CD8-positive, alpha-beta T cell (primary cell): ENCODE measurements at regions of chr10 and their contacts with region 1.

Region 1: GRCh38 chr10:68331455-68332258 is at the start of gene HNRNPH3:
- DNase-seq: peak; percentile 98 to 100 (median 99)
- ATAC-seq: peak; percentile 82
- H3K4me3 ChIP-seq: peak within 1 kb of the TSS; percentile 75 to 83
- H3K4me3 Mint-ChIP-seq: peak within 1 kb of the TSS; percentile 100
- H3K27ac ChIP-seq: peak within 1 kb of the TSS; percentile 86 to 99
- H3K27ac Mint-ChIP-seq: peak within 1 kb of the TSS; percentile 100
- H3K4me1 ChIP-seq: peaks cover 28% of the 10 kb centered on the region
- H3K4me1 Mint-ChIP-seq: peaks cover 44% of the 10 kb centered on the region
- H3K27me3 ChIP-seq: no peaks in the 10 kb centered on the region
- H3K27me3 Mint-ChIP-seq: no peaks in the 10 kb centered on the region
- CTCF ChIP-seq: no peak
- total RNA-seq, gene HNRNPH3: 242 to 255 TPM

Region 2: DNA sequence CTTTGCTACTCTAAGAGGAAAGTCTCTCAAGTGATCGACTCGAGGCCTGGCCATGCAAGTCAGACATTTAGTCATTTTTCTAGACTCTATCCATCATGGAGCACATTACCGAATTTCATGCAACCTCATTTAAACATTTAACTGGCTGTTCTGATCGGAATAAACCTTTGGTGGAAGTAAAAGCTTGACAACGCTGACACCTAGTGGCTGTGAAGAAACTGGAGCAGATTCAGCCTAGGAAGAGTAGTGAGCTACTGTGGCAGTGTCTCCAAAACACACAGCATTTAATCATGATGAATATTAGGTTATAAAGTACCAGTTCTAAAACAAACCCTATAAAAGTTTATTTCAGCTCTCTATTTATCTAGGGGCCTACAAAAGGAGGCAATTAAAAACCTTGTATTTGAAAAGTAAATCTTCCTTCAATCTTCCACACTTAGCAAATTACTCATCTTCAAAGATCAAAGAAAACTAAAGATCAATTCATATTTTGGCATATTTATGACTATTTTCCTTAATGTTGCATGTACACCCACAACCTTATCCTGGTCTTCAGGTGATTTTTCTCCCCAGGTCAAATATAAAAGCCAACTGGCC is 810.6 kb before region 1 on chr10:
- CTCF ChIA-PET with region 1: no interaction called
- POLR2A ChIA-PET with region 1: no interaction called
- intact Hi-C with region 1: no loop called
- DNase-seq: peak in 6 of 9 experiments; percentile 4 to 59 (median 15)
- ATAC-seq: peak; percentile 42
- H3K4me3 ChIP-seq: no peak overlapping the region
- H3K4me3 Mint-ChIP-seq: no peak overlapping the region
- H3K27ac ChIP-seq: no peak overlapping the region
- H3K27ac Mint-ChIP-seq: no peak overlapping the region
- H3K4me1 ChIP-seq: no peaks in the 10 kb centered on the region
- H3K4me1 Mint-ChIP-seq: no peaks in the 10 kb centered on the region
- H3K27me3 ChIP-seq: no peaks in the 10 kb centered on the region
- H3K27me3 Mint-ChIP-seq: peaks cover 3% of the 10 kb centered on the region
- CTCF ChIP-seq: peak; percentile 61

Region 3: GRCh38 chr10:68074775-68075549 is 256.7 kb before region 1 on chr10 and contains the start of gene HERC4:
- CTCF ChIA-PET with region 1: no interaction called
- POLR2A ChIA-PET with region 1: no interaction called
- intact Hi-C with region 1: loop called (anchors 1 to 5 kb)
- DNase-seq: peak; percentile 83 to 96 (median 90)
- ATAC-seq: peak; percentile 90
- H3K4me3 ChIP-seq: peak within 1 kb of the TSS; percentile 96
- H3K4me3 Mint-ChIP-seq: peak within 1 kb of the TSS; percentile 96
- H3K27ac ChIP-seq: peak within 1 kb of the TSS; percentile 91 to 96
- H3K27ac Mint-ChIP-seq: peak within 1 kb of the TSS; percentile 93
- H3K4me1 ChIP-seq: peaks cover 38% of the 10 kb centered on the region
- H3K4me1 Mint-ChIP-seq: peaks cover 40% of the 10 kb centered on the region
- H3K27me3 ChIP-seq: no peaks in the 10 kb centered on the region
- H3K27me3 Mint-ChIP-seq: no peaks in the 10 kb centered on the region
- CTCF ChIP-seq: no peak
- total RNA-seq, gene HERC4: 28.4 to 29.2 TPM

Region 4: DNA sequence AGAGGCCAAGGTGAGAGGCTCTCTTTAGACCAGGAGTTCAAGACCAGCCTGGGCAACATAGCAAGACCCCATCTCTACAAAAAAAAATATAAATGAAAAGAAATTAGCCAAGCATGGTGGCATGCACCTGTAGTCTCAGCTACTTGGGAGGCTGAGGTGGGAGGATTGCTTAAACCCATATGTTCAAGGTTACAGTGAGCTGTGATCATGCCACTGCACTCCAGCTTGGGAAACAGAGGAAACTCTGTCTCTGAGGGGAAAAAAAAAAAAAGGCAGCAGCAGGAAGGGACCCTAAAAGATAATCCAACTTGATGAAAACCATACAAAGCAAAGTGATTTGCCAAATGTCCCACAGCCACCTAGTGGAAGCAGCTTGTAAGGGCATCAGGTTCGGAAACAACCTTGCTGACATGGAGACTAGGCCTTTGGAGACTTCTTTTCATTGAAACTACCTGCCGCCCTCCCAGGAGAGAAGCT is 16.6 kb after region 1 on chr10:
- CTCF ChIA-PET with region 1: interaction called, 8 read pairs
- POLR2A ChIA-PET with region 1: interaction called, 36 read pairs
- intact Hi-C with region 1: loop called (anchors 2 kb)
- DNase-seq: peak in 8 of 9 experiments; percentile 6 to 76 (median 46)
- ATAC-seq: peak; percentile 90
- H3K4me3 ChIP-seq: no peak overlapping the region
- H3K4me3 Mint-ChIP-seq: no peak overlapping the region
- H3K27ac ChIP-seq: peak overlapping the region in 1 of 2 experiments; percentile 33
- H3K27ac Mint-ChIP-seq: peak overlapping the region; percentile 76
- H3K4me1 ChIP-seq: no peaks in the 10 kb centered on the region
- H3K4me1 Mint-ChIP-seq: peaks cover 6% of the 10 kb centered on the region
- H3K27me3 ChIP-seq: no peaks in the 10 kb centered on the region
- H3K27me3 Mint-ChIP-seq: no peaks in the 10 kb centered on the region
- CTCF ChIP-seq: peak; percentile 79

Region 5: GRCh38 chr10:68471586-68472408 is 140.1 kb after region 1 on chr10 and contains the start of gene DNA2:
- CTCF ChIA-PET with region 1: no interaction called
- POLR2A ChIA-PET with region 1: interaction called, 7 read pairs
- intact Hi-C with region 1: loop called in 1 of 2 experiments (anchors 2 kb)
- DNase-seq: peak; percentile 46 to 85 (median 68)
- ATAC-seq: peak; percentile 81
- H3K4me3 ChIP-seq: peak within 1 kb of the TSS; percentile 72 to 96
- H3K4me3 Mint-ChIP-seq: peak within 1 kb of the TSS; percentile 99
- H3K27ac ChIP-seq: peak within 1 kb of the TSS; percentile 22 to 47
- H3K27ac Mint-ChIP-seq: peak within 1 kb of the TSS; percentile 79
- H3K4me1 ChIP-seq: no peaks in the 10 kb centered on the region
- H3K4me1 Mint-ChIP-seq: peaks cover 23% of the 10 kb centered on the region
- H3K27me3 ChIP-seq: no peaks in the 10 kb centered on the region
- H3K27me3 Mint-ChIP-seq: no peaks in the 10 kb centered on the region
- CTCF ChIP-seq: no peak
- total RNA-seq, gene DNA2: 5.3 to 9.9 TPM

Region 6: DNA sequence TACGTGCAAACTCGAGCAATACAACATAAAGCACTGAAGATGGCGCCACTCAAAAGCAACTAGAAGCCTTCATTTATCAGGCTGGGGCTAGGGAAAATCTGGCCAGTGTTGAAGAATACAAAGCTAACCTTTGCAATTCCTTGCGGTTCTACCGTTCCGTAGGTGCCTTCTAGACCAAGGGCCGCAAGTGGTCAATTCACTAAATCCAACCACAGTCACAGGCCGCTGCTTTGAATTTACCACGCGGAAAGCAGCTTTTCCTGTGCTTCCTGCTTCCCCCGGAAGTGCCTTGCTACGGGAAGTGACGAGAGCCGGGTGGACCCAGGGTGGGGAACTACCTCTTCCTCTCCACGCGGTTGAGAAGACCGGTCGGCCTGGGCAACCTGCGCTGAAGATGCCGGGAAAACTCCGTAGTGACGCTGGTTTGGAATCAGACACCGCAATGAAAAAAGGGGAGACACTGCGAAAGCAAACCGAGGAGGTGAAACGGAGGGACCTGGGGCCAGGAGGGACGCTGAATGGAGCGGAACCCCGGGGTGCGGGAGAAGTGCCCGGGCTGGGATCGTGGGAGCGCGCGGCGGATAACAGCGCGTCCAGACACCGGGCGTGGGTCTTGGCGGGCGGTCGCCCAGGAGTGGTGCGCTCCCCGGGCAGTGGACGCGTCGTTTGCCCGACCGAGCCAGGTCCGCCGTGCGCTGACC is 624.3 kb after region 1 on chr10 and contains the start of gene DDX21:
- CTCF ChIA-PET with region 1: no interaction called
- POLR2A ChIA-PET with region 1: no interaction called
- intact Hi-C with region 1: loop called in 1 of 2 experiments (anchors 5 kb)
- DNase-seq: peak; percentile 68 to 95 (median 89)
- ATAC-seq: peak; percentile 75
- H3K4me3 ChIP-seq: peak within 1 kb of the TSS; percentile 85 to 96
- H3K4me3 Mint-ChIP-seq: peak within 1 kb of the TSS; percentile 100
- H3K27ac ChIP-seq: peak within 1 kb of the TSS; percentile 95 to 99
- H3K27ac Mint-ChIP-seq: peak within 1 kb of the TSS; percentile 100
- H3K4me1 ChIP-seq: peaks cover 21% of the 10 kb centered on the region
- H3K4me1 Mint-ChIP-seq: peaks cover 41% of the 10 kb centered on the region
- H3K27me3 ChIP-seq: no peaks in the 10 kb centered on the region
- H3K27me3 Mint-ChIP-seq: no peaks in the 10 kb centered on the region
- CTCF ChIP-seq: peak; percentile 71
- total RNA-seq, gene DDX21: 175 to 185 TPM